Dorsolateral prefrontal cortex (tissue), 120 donors: ENCODE measurements at regions of chr5 and their contacts with region 1.

Region 1: GRCh38 chr5:129917224-129917623 is 13.0 kb downstream of the CHSY3 start:
- DNase-seq: no peak
- H3K4me3 ChIP-seq: no peak overlapping the region
- H3K27ac ChIP-seq: peak overlapping the region in 1 of 59 donors; percentile 23
- H3K27me3 ChIP-seq: no peaks in the 10 kb centered on the region
- CTCF ChIP-seq: no peak

Region 2: DNA sequence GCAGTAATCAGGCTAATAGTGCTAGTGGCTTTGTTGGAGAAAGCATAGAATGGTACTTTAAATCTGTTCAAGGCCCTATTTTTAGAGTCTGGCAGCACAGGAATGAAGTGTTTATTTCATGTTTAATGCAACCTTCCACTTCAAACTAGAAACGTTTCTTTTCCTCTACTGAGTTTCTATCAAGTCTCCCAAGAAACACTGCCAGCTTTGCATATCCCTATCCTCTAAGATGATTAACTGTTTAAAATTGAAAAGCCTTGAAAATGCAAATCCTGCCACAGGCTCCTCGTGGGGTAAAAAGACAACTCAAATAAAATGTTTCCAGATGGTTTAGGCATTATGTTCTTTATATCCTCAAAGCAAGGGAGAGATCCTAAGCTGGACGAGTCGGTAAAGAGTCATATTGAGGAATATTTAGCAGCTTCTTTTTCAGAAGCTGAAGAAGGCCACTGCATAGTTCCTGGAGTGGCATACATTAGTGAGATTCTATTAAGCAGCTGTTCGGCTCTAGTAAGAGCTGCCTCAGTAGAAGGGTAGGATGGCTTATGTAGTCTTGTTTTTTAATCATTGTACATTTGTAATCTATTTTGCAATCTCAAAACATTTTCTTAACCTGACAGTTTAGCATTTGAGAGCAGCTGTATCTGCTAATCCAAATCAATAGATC is 238.3 kb after region 1 on chr5:
- intact Hi-C with region 1: loop called in 1 of 2 experiments (anchors 10 kb)
- DNase-seq: no peak
- H3K4me3 ChIP-seq: no peak overlapping the region
- H3K27ac ChIP-seq: peak overlapping the region in 55 of 59 donors; percentile 7 to 81 (median 59)
- H3K27me3 ChIP-seq: no peaks in the 10 kb centered on the region
- CTCF ChIP-seq: no peak